Upper lobe of right lung (tissue), 1 donor: ENCODE measurements at regions of chr4 and their contacts with region 1.

Region 1: DNA sequence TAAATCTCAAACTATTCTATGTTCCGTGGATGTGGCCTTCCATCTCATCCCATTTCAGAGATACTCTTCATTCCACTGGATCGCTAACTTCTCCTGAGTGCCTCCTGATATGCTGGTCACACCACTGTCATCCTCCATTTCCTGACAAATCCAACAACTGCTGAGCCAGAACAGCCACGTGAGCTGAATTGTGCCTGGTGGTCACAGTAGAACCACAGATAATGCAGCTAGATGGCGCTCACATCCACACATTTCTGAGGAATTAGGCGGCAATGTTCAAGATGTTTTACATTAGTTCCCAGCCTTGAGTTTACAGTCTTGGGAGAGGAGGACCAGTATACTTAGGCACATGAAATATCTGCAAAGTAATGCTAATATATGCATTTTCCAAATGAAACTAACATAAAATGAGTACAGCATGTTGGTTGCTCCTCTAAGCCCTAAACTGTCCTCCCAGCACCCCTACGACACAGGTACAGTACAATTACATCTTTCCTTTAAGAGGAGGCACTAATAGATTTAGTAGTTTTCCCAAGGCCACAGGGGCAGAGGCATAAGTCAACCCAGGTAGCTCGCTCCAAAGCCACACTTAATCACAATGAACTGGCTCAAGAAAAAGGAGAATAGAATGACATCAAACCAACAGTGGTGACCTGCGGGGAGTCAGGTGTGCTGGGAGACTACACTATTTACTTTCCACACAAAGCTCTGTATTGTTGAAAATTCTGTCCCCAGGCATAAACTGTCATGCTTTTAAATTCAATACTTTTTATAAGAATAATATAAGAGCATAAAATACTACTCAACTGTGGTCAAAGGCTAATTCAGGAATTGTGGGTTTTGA is 134.2 kb downstream of the CHIC2 start:
- DNase-seq: no peak
- ATAC-seq: peak; percentile 95
- H3K4me3 ChIP-seq: no peak overlapping the region
- H3K27ac ChIP-seq: no peak overlapping the region
- H3K4me1 ChIP-seq: no peaks in the 10 kb centered on the region
- H3K27me3 ChIP-seq: no peaks in the 10 kb centered on the region
- CTCF ChIP-seq: peak; percentile 73

Region 2: DNA sequence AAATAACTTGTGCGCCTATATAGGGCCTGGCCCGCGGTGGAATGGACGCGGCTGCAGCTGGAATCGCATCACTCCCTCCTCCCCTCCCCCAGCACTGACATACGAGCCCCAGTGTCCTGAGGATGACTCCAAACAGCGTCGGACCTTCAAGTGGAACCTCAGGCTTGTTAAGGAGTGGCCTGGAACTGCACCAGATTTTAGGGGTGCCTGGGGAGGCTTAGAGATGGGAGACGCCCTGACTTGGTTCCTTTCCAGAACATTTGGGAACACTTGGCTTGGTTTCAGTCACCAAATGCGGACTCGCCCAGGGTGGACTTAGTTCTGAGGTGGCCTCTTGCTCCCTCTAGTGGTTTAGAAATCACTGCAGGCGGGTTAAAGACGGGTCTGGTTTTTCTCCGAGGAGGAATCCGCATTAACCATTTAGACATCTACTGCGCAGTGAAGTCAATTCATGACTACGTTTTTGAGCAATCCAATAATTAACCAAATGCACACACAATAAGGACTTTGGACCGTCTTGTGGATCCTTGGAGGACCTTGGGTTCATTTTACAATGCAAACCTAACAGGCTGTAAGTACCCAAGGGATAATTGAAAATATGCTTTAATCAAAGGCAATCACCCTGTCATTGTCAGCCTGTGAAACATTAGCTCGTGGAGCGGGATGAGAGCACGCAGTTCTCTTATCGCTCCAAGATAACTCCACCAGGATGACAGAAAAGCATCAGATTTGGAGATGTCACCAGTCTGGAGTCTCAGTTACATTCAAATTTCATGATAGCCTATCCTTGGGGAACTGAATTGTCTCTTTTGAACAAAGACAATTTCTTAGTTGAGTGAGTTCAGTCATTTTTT is 287.7 kb after region 1 on chr4:
- intact Hi-C with region 1: loop called (anchors 5 kb)
- DNase-seq: peak; percentile 70
- ATAC-seq: peak; percentile 96
- H3K4me3 ChIP-seq: peak overlapping the region; percentile 35
- H3K27ac ChIP-seq: no peak overlapping the region
- H3K4me1 ChIP-seq: no peaks in the 10 kb centered on the region
- H3K27me3 ChIP-seq: peaks cover 23% of the 10 kb centered on the region
- CTCF ChIP-seq: peak; percentile 91